ENCODE measurements at regions of chr13 and their contacts with region 1.

Region 1: DNA sequence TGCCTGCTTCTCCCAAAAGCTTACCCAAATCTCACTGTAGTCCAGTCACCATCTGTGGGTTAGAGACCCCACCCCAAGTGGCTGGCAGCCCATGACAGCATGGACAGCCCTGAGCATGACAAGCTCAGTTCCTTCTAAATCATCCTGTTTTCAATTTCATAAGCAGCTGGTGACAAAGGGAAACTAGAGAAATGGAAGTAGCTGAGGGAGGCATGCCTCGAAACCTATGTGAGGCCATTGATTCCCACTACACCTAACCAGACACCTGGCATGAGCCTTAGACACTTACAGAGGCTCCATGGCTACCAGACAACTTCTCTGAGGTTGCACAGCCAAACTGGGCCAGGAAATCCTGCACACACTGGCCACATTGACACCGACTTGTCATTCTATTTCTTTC is 56.2 kb downstream of the ABCC4 start:
- DNase-seq: no peak
- ATAC-seq: no peak
- H3K4me3 ChIP-seq: no peak overlapping the region
- H3K27ac ChIP-seq: no peak overlapping the region
- H3K4me1 ChIP-seq: peaks cover 16 to 19% of the 10 kb centered on the region in 2 experiments; a peak in 3 of 4 replicates
- H3K27me3 ChIP-seq: no peaks in the 10 kb centered on the region
- CTCF ChIP-seq: no peak
- POLR2A ChIP-seq: no peak
- RAD21 ChIP-seq: no peak

Region 2: DNA sequence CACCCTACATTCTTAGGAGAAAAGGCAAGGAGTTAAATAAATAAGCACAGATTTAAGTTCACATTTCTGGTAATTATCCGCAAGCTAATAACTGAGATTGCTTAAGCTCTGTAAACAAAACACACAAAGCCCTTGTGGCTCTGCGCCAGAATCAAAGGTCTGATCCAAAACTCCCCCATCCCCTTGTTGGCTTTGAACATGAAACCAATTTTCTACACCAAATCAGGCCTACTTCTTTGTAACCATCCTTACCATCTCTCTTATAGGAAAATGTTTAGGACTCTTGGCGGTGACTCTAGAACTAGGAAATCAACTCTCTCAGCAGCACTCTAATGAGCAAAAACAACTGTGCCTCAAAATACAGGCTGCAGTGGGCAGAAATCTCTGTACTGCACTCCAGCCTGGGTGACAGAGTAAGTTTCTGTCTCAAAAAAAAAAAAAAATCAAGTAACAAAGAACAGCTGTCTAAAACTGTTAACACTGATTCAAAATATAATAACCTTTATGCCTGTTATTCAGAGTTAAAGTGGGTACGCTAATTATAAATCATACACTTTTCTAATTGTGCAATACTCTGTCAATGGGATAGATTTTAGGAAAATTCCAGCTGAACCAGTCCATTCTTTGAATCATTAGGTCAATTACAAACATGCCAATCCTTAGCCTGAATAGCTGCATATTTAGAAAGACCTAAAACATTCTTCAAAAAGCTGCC is 30.4 kb after region 1 on chr13:
- CTCF ChIA-PET with region 1: no interaction called
- POLR2A ChIA-PET with region 1: no interaction called
- RAD21 ChIA-PET with region 1: no interaction called
- intact Hi-C with region 1: loop called (anchors 1 kb)
- DNase-seq: no peak
- ATAC-seq: no peak
- H3K4me3 ChIP-seq: no peak overlapping the region
- H3K27ac ChIP-seq: no peak overlapping the region
- H3K4me1 ChIP-seq: peaks cover under 1 to 12% of the 10 kb centered on the region in 2 experiments; a peak in 3 of 4 replicates
- H3K27me3 ChIP-seq: no peaks in the 10 kb centered on the region
- CTCF ChIP-seq: no peak
- POLR2A ChIP-seq: no peak
- RAD21 ChIP-seq: no peak